Sciatic nerve (tissue), 2 donors: ENCODE measurements at regions of chr17 and their contacts with region 1.

Region 1: GRCh38 chr17:62703775-62704378 is 76.4 kb downstream of the MRC2 start:
- DNase-seq: peak; percentile 89
- ATAC-seq: peak; percentile 85

Region 2: DNA sequence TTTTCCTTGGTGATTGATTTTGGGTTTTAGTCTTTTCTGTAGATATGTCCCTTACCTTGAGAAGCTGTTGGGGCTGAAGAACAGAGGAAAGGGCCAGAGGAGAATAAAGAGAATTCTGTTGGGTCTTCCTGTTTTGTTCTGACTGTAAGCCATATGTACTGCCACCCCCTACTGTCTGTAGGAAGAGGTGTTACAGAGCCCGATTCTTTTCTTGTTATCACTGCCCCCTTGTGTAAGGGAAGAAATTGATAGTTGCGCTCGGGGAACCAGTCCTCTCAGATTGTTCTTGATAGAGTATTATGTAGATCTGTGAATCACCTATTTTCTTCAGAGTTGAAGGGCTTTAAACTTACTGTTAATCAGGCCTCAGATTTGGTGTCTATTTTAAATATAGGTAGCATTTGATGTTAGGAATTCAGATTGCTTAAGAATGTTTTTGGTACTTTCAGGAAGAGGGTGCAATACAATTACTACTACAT is 264.6 kb after region 1 on chr17:
- intact Hi-C with region 1: loop called (anchors 5 kb)
- DNase-seq: no peak
- ATAC-seq: peak; percentile 71

Region 3: DNA sequence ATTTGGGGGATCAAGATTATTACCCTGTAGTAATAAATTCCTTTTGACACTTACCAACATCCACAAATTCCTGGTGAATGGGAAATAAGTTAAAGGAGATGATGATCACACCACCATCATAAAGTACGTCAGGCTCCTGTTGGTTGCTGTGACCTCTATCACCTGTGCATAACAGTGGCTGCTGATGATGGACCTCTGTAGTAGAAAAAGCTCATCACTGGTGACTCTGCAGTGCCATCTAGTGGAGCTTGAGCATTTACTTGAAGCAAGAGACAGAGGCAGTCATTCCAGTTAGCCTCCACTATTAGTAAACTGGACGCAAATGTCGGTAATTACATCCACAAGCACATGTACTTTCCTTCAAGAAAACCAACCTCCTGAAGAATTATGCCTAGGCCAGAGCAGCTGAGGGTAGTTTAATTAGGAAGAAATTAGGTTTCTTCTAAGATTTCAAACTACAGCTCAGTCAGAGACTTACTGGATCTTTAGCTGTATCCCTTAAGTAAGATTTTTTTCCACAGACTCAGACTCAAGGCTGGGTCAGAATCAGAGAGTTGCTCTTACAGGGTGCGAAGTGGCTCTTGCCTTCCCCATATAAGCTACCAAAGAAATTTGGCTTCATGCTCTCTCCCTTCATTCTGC is 702.9 kb after region 1 on chr17:
- intact Hi-C with region 1: loop called (anchors 10 kb)
- DNase-seq: peak; percentile 79
- ATAC-seq: peak; percentile 88